Activated T-helper 1 cell treated with anti-CD3 and anti-CD28 coated beads, Interleukin-12 subunit alpha, Interleukin-12 subunit beta, Interleukin-2, Interleukin-4 antibody, amounts not matched to agents 30 ng/mL and 10 ng/mL and 1 ng/mL, durations not matched to agents 14 hours and 24 hours and 36 hours (primary cell): ENCODE measurements at regions of chr5 and their contacts with region 1.

Region 1: GRCh38 chr5:73835726-73836125 is 209.7 kb downstream of the ARHGEF28 start:
- DNase-seq: no peak
- H3K4me3 Mint-ChIP-seq: no peak overlapping the region
- H3K27ac Mint-ChIP-seq: no peak overlapping the region
- H3K4me1 Mint-ChIP-seq: no peaks in the 10 kb centered on the region
- H3K27me3 Mint-ChIP-seq: peaks cover 9% of the 10 kb centered on the region

Region 2: DNA sequence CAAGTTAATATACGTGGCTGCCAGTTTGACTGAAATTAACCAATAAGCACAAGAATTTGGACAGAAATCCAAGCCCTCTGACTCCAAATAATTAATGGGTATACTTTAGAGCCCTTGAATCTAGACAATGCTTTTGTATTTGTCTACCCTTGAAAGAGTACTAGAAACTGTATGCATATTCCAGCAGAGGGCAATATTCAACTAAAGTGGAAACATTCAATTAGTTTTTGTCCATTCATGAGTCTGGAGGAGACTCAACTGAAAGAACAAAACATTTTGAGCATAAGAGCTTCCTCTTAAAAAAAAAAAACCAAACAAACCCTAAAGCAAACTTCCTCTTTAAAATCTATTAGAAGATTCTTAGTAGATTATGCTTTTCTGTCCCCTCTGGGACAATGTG is 51.9 kb before region 1 on chr5:
- intact Hi-C with region 1: loop called (anchors 2 kb)
- DNase-seq: no peak
- H3K4me3 Mint-ChIP-seq: no peak overlapping the region
- H3K27ac Mint-ChIP-seq: no peak overlapping the region
- H3K4me1 Mint-ChIP-seq: no peaks in the 10 kb centered on the region
- H3K27me3 Mint-ChIP-seq: peaks cover 7% of the 10 kb centered on the region